GM13976 (cell line): ENCODE measurements at regions of chr3 and their contacts with region 1.

Region 1: GRCh38 chr3:45929042-45929679 is 14.1 kb upstream of the CXCR6 start:
- DNase-seq: peak; percentile 88
- CTCF ChIP-seq: peak; percentile 91

Region 2: GRCh38 chr3:45381168-45381852 is 547.9 kb before region 1 on chr3:
- in situ Hi-C with region 1: no loop called
- DNase-seq: no peak
- CTCF ChIP-seq: no peak

Region 3: GRCh38 chr3:45516829-45517228 is 412.3 kb before region 1 on chr3:
- in situ Hi-C with region 1: loop called (anchors 10 kb)
- DNase-seq: no peak
- CTCF ChIP-seq: no peak

Region 4: DNA sequence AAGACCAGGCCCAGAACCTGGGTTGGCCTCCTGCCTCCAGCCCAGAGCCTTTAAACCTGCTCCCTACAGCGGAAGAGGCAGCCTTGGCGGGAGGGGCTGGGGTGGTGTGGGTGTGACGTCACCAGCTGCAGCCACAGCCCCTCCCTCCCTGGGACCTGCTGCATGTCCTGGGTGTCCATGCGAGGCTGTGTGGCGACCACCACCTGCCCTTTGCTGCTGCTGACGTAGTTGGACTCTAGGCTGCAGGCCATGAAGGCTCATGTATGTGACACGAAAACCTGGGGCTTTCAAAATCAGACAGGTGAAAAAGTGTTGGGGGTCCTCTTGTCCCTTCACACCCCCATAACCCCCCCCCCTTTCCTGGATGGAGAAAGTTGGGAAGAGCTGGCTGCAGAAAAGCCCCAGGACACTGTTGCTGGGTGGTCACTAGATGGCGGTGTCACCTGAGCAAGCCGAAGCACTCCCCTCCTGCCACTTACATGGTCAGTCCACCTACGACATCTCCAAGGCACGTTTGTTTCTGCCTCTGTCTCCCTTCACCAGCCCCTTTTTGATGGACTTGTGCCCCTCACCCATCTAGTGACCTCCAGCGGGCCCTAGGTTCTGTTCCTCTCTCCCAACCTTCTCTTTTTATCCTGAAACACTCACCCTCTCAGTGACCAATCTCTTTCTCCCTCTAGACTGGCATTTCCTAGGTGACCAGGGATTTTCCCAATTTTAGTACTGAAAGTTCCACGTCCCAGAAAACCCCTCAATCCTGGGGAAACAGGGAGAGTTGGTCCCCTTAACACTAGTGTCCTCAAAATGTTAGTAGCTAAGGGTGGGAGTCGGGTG is 168.1 kb before region 1 on chr3:
- in situ Hi-C with region 1: loop called (anchors 5 kb)
- DNase-seq: peak; percentile 91
- CTCF ChIP-seq: peak; percentile 80